ENCODE measurements at regions of chr22 and their contacts with region 1.

Region 1: DNA sequence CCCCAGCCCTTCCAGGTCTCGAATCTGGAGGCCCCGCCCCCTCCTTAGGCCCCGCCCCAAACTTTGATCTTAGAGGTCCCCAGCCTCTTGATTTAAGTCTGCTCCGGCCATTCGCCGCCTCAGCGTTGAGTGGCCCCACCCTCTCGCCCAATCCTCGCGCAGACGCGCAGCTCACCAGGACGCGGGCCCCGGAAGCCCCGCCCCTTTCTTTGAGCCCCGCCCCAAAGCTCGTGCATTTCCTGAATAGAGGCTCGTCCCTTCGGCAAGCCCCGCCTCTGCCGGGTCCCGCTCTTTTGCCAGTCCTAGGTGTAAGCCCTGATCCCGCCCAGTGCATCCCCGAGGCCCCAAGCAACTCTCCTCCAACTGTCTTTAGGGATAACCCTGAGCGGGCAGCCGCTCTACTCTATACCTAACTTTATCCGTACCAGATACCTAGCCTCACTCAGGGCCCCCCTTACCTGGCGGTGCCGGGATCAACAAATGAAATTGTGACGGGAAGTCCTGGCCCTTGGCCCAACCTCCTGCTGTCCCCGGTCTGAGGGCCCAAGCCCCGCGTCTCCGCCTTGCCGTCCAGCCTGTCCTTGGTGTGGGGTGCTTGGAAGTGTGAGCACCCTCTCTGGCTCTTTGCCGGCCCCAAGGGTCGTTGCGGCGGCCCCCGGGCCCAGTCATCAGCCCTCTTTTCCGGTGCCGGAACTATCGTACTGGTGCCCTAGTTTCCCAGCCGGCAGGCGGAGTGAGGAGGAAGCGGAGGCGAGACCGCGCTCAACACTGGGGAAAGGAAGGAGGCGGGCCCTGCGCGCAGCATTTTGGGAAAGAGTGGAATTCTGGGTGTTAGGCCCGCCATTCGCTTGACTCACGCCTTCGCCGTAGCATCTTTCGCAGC is at the start of gene SNRPD3:
- DNase-seq: peak; percentile 99
- H3K4me3 Mint-ChIP-seq: peak within 1 kb of the TSS; percentile 99
- H3K27ac Mint-ChIP-seq: peak within 1 kb of the TSS; percentile 99
- H3K4me1 Mint-ChIP-seq: peaks cover 50% of the 10 kb centered on the region
- H3K27me3 Mint-ChIP-seq: no peaks in the 10 kb centered on the region
- total RNA-seq, gene SNRPD3: 166 and 175 TPM in 2 replicates

Region 2: DNA sequence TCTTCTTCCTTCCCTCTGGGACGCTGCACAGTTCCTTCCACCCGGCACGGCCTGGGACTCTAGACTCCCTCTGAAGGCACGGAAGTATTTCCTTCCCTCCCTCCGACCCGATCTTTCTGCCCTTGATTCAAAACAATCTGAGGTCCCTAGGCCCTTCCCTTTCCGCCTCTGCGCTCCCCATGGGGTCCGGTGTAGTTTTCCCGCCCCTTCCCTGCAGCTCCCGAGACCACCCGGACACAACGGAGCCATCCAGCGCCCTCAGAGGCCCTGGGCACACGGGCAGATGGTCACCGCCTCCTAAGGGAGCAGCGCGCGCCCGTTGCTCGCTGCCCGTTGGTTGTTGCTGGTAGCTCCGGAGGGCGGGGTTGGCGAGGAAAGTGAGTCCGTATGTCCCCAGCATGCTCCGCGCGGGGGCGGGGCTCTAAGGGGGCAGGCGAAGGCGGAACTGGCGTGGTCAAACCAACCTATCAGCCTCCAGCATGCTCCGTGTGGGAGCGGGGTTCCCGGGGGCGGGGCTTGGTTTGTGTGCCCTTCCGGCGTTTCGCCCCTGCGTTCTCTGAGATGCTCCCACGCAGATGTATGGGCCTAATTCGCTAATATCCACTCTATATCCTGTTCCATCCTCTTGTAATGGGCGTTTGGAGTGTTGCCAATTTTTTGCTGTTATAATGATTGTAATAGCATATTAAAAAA is 641.6 kb before region 1 on chr22:
- intact Hi-C with region 1: loop called (anchors 5 kb)
- DNase-seq: peak; percentile 100
- H3K4me3 Mint-ChIP-seq: peak overlapping the region; percentile 95
- H3K27ac Mint-ChIP-seq: peak overlapping the region; percentile 99
- H3K4me1 Mint-ChIP-seq: peaks cover 26% of the 10 kb centered on the region
- H3K27me3 Mint-ChIP-seq: no peaks in the 10 kb centered on the region

Region 3: DNA sequence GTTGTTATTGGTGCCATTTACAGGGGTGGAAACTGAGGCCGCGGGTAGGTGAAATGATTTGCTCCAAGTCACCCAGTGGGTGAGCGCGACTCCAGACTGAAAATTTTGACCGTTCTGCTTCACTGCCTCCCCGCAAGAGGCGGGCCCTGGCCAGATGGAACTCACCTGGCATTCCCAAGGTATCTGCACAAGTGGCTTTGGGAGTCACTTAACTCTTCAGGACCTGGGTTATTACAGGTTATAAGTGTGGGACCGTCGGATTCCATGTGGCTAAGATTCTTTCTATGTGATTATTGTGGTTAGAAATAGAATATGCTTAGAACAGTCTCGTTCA is 543.7 kb before region 1 on chr22:
- intact Hi-C with region 1: loop called (anchors 10 kb)
- DNase-seq: no peak
- H3K4me3 Mint-ChIP-seq: peak overlapping the region; percentile 97
- H3K27ac Mint-ChIP-seq: peak overlapping the region; percentile 98
- H3K4me1 Mint-ChIP-seq: peaks cover 33% of the 10 kb centered on the region
- H3K27me3 Mint-ChIP-seq: no peaks in the 10 kb centered on the region

Region 4: GRCh38 chr22:24156913-24157821 is 398.2 kb before region 1 on chr22:
- intact Hi-C with region 1: loop called (anchors 5 kb)
- DNase-seq: peak; percentile 97
- H3K4me3 Mint-ChIP-seq: peak overlapping the region; percentile 92
- H3K27ac Mint-ChIP-seq: peak overlapping the region; percentile 92
- H3K4me1 Mint-ChIP-seq: peaks cover 65% of the 10 kb centered on the region
- H3K27me3 Mint-ChIP-seq: no peaks in the 10 kb centered on the region

Region 5: GRCh38 chr22:24427500-24428164 is 127.8 kb before region 1 on chr22 and contains the start of gene ADORA2A:
- intact Hi-C with region 1: loop called (anchors 1 kb)
- DNase-seq: peak; percentile 93
- H3K4me3 Mint-ChIP-seq: peak within 1 kb of the TSS; percentile 86
- H3K27ac Mint-ChIP-seq: peak within 1 kb of the TSS; percentile 90
- H3K4me1 Mint-ChIP-seq: peaks cover 58% of the 10 kb centered on the region
- H3K27me3 Mint-ChIP-seq: peaks cover under 1% of the 10 kb centered on the region
- total RNA-seq, gene ADORA2A: 34.9 and 36.2 TPM in 2 replicates

Region 6: GRCh38 chr22:24433813-24434470 is 121.5 kb before region 1 on chr22:
- intact Hi-C with region 1: loop called (anchors 1 kb)
- DNase-seq: no peak
- H3K4me3 Mint-ChIP-seq: peak overlapping the region; percentile 83
- H3K27ac Mint-ChIP-seq: peak overlapping the region; percentile 100
- H3K4me1 Mint-ChIP-seq: peaks cover 65% of the 10 kb centered on the region
- H3K27me3 Mint-ChIP-seq: peaks cover 2% of the 10 kb centered on the region

Region 7: GRCh38 chr22:24592851-24593558 is 37.6 kb after region 1 on chr22 and contains the start of gene LRRC75B:
- intact Hi-C with region 1: loop called (anchors 5 kb)
- DNase-seq: peak; percentile 87
- H3K4me3 Mint-ChIP-seq: peak within 1 kb of the TSS; percentile 90
- H3K27ac Mint-ChIP-seq: peak within 1 kb of the TSS; percentile 76
- H3K4me1 Mint-ChIP-seq: peaks cover 8% of the 10 kb centered on the region
- H3K27me3 Mint-ChIP-seq: peaks cover 4% of the 10 kb centered on the region
- total RNA-seq, gene LRRC75B: 2.6 and 3.2 TPM in 2 replicates